ENCODE measurements at regions of chr1 and their contacts with region 1.

Region 1: GRCh38 chr1:153572569-153573015 is 6.9 kb upstream of the S100A2 start:
- DNase-seq: peak in 1 of 2 experiments; percentile 43
- H3K4me3 ChIP-seq: no peak overlapping the region
- H3K27ac ChIP-seq: no peak overlapping the region
- H3K4me1 ChIP-seq: peaks cover 4 to 8% (median 7%) of the 10 kb centered on the region in 4 experiments; a peak in 6 of 7 replicates
- H3K27me3 ChIP-seq: 0 out of 7 replicates have a peak, but pooled peaks cover 0 to 4% (median 0%) of the 10 kb centered on the region in 4 experiments
- CTCF ChIP-seq: peak; percentile 91 to 95 (median 92)
- EP300 ChIP-seq: no peak
- POLR2A ChIP-seq: no peak
- RAD21 ChIP-seq: peak; percentile 93 to 97

Region 2: GRCh38 chr1:153510984-153511410 is 61.6 kb before region 1 on chr1:
- CTCF ChIA-PET with region 1: interaction called, 86 read pairs
- POLR2A ChIA-PET with region 1: interaction called, 3 read pairs
- DNase-seq: peak in 1 of 2 experiments; percentile 93
- H3K4me3 ChIP-seq: no peak overlapping the region
- H3K27ac ChIP-seq: no peak overlapping the region
- H3K4me1 ChIP-seq: peaks cover 0 to 3% (median 1%) of the 10 kb centered on the region in 4 experiments; a peak in 3 of 7 replicates
- H3K27me3 ChIP-seq: peaks cover 0 to 5% (median 2%) of the 10 kb centered on the region in 4 experiments; a peak in 3 of 7 replicates
- CTCF ChIP-seq: peak; percentile 95 to 97 (median 95)
- EP300 ChIP-seq: no peak
- POLR2A ChIP-seq: no peak
- RAD21 ChIP-seq: peak; percentile 99 to 100

Region 3: DNA sequence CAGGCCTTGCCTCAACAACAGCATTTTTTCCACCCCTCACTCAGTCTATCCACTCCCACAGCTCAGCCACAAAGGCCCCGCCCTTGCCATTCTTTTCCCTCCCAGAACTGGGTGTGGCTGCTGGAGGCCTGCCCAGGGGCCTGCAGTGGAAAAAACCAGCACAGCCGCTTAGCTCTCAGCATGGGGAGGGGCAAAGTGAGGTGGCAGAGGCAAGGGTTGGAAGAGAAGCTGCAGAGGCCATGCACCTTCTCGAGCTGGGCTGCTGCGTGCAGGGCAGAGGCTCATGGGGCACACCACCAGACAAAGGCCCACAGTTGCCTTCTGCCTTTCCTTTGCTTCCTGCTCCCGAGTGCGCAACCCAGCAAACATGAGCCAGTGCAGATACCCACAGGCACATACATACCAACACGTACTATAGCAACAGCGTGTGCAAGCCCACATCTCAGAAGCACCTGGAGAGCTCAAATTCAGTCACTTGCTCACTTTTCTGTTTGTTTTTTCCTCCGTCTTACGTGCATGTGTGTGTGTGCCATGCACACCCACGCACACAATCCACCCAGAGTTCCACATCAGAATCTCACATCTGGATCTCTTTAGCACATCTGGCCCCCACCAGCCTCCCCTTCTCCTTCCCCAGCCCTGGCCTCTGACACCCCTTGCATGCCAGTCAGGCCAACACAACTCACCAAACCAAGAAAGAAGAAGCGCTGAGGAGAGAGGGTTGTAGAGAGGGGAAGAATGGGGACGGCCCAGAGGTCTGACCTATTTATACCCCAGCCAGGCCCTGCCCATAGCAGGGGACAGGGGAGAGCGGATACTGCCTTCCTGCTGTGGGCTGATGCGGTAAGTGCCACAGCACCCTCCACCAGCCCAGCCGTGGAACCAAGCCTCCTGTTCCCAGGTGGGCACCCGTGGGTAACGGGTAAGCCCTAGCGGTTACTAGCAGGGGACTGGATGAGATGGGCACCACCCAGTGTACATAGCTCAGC is 27.2 kb before region 1 on chr1 and contains the start of gene S100A4:
- CTCF ChIA-PET with region 1: interaction called, 38 read pairs
- POLR2A ChIA-PET with region 1: interaction called, 9 read pairs
- DNase-seq: peak in 1 of 2 experiments; percentile 87
- H3K4me3 ChIP-seq: peak within 1 kb of the TSS in 1 of 4 experiments; percentile 32; a peak in 2 of 8 replicates
- H3K27ac ChIP-seq: peak within 1 kb of the TSS; percentile 55
- H3K4me1 ChIP-seq: peaks cover 4 to 35% (median 21%) of the 10 kb centered on the region in 4 experiments
- H3K27me3 ChIP-seq: no peaks in the 10 kb centered on the region; a peak in 2 of 7 replicates
- CTCF ChIP-seq: no peak
- EP300 ChIP-seq: 0 out of 3 replicates have a peak, but pooled peaks of 1 of the 2 experiments have one; percentile 31
- POLR2A ChIP-seq: peak in 1 of 2 experiments; percentile 34; a peak in 1 of 3 replicates
- RAD21 ChIP-seq: no peak
- total RNA-seq, gene S100A4: 36.3 and 39.6 TPM in 2 replicates

Region 4: GRCh38 chr1:153598309-153599172 is 25.9 kb after region 1 on chr1:
- CTCF ChIA-PET with region 1: interaction called, 11 read pairs
- POLR2A ChIA-PET with region 1: interaction called, 5 read pairs
- DNase-seq: peak; percentile 53 to 63
- H3K4me3 ChIP-seq: no peak overlapping the region
- H3K27ac ChIP-seq: no peak overlapping the region
- H3K4me1 ChIP-seq: peaks cover 3 to 10% (median 5%) of the 10 kb centered on the region in 4 experiments; a peak in 4 of 7 replicates
- H3K27me3 ChIP-seq: no peaks in the 10 kb centered on the region
- CTCF ChIP-seq: no peak
- EP300 ChIP-seq: peak in 1 of 2 experiments; percentile 80; a peak in 1 of 3 replicates
- POLR2A ChIP-seq: peak in 1 of 2 experiments; percentile 59; a peak in 2 of 3 replicates
- RAD21 ChIP-seq: 0 out of 4 replicates have a peak, but pooled peaks of 1 of the 2 experiments have one; percentile 8

Region 5: GRCh38 chr1:153633716-153634665 is 61.4 kb after region 1 on chr1 and contains the start of gene CHTOP:
- CTCF ChIA-PET with region 1: interaction called, 115 read pairs
- POLR2A ChIA-PET with region 1: interaction called, 10 read pairs
- DNase-seq: peak; percentile 98 to 100
- H3K4me3 ChIP-seq: peak within 1 kb of the TSS; percentile 73 to 100 (median 97)
- H3K27ac ChIP-seq: peak within 1 kb of the TSS; percentile 100
- H3K4me1 ChIP-seq: peaks cover 0 to 5% (median 5%) of the 10 kb centered on the region in 4 experiments; a peak in 5 of 7 replicates
- H3K27me3 ChIP-seq: no peaks in the 10 kb centered on the region
- CTCF ChIP-seq: peak in 1 of 3 experiments; percentile 10; a peak in 1 of 4 replicates
- EP300 ChIP-seq: no peak
- POLR2A ChIP-seq: peak; percentile 82 to 97
- RAD21 ChIP-seq: no peak
- total RNA-seq, gene CHTOP: 103 and 104 TPM in 2 replicates